ENCODE measurements at regions of chr1 and their contacts with region 1.

Region 1: GRCh38 chr1:220363196-220363837 is 91.1 kb upstream of the RAB3GAP2 start:
- DNase-seq: peak; percentile 81
- H3K4me3 ChIP-seq: no peak overlapping the region
- H3K27ac ChIP-seq: no peak overlapping the region
- H3K4me1 ChIP-seq: peaks cover 19% of the 10 kb centered on the region
- H3K27me3 ChIP-seq: no peaks in the 10 kb centered on the region
- CTCF ChIP-seq: no peak

Region 2: DNA sequence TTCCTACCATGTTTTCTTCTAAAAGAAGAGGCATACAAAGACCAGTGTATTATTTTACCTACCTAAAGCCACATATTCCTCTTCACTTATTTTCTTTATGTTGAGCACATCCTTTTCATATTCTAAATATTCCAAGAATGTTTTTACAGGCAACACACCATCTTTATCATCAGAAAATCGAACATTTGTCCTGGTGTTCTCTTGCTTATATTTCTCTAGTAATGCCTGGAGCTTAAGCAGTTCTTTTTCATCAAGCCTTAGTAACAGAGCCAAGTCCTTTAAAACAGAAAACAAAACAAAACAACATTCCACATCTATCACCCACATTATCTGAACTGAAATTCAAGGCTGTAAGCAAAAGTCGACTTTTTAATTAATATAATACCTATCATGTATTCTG is 180.7 kb before region 1 on chr1:
- CTCF ChIA-PET with region 1: no interaction called
- POLR2A ChIA-PET with region 1: no interaction called
- intact Hi-C with region 1: no loop called
- DNase-seq: no peak
- H3K4me3 ChIP-seq: no peak overlapping the region
- H3K27ac ChIP-seq: no peak overlapping the region
- H3K4me1 ChIP-seq: no peaks in the 10 kb centered on the region
- H3K27me3 ChIP-seq: no peaks in the 10 kb centered on the region
- CTCF ChIP-seq: no peak

Region 3: GRCh38 chr1:220410611-220411010 is 47.3 kb after region 1 on chr1:
- CTCF ChIA-PET with region 1: no interaction called
- POLR2A ChIA-PET with region 1: no interaction called
- intact Hi-C with region 1: loop called (anchors 2 kb)
- DNase-seq: peak; percentile 80
- H3K4me3 ChIP-seq: peak overlapping the region; percentile 12
- H3K27ac ChIP-seq: peak overlapping the region; percentile 56
- H3K4me1 ChIP-seq: peaks cover 29% of the 10 kb centered on the region
- H3K27me3 ChIP-seq: no peaks in the 10 kb centered on the region
- CTCF ChIP-seq: no peak

Region 4: DNA sequence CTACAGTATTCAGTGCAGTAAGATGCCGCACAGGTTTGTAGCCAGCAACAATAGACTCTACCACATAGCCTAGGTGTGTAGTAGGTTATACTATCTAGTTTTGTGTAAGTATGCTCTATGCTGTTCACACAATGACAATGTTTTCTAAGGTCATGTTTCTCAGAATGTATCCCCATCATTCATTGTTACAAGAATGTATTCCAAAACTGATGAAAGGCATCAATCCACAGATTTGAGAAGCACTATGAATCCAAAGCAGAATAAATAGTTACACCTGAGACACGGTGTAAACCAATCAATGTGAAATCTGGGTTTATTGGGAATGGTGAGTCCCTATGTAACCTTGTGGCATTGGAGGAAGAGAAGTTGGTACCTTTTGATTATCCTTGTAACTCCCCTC is 110.1 kb after region 1 on chr1:
- CTCF ChIA-PET with region 1: no interaction called
- POLR2A ChIA-PET with region 1: no interaction called
- intact Hi-C with region 1: no loop called
- DNase-seq: no peak
- H3K4me3 ChIP-seq: no peak overlapping the region
- H3K27ac ChIP-seq: no peak overlapping the region
- H3K4me1 ChIP-seq: no peaks in the 10 kb centered on the region
- H3K27me3 ChIP-seq: no peaks in the 10 kb centered on the region
- CTCF ChIP-seq: no peak

Measured in A673 (cell line).